Heart right ventricle (tissue), 16 donors: ENCODE measurements at regions of chr9 and their contacts with region 1.

Region 1: DNA sequence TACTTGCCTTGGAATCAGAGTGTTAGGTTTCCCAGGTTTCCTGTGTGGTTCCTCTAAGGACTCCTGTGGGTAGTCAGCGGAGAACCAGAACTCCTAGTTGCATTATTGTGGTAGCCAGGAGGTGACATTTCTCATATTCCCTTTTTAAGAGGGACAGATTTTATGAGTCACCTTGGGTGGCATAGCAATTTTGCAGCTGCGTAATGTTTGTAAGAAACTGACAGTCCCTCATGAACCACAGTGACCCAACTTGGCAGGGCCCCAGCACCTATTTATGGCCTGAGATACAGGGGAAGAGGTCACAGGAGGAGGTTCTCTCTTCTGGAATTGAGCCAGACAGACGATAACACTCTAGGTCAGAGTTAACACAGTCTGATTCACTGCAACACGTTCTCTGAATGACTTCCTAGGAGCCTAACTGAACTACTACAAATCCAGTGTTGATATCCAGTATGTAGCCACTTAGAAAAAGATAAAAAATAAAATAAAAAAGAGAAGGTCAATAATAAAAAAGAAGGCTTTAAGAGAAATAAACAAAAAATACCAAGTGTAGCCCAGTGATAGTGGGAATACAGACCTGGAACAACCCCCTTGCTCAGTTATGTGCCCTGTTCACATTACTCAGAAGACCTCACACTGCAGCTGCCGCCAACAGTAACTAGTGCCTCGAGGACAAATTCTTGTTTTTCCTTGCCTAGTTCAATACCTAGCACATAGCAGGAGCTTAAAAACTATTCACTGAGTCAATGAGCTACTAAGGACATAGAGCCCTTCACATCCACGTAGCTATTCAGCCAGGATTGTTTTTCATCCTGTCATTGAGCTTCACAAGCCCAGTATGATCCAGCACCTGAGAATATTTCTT is 50.7 kb upstream of the VLDLR start:
- DNase-seq: peak; percentile 92 to 95
- ATAC-seq: peak; percentile 86 to 96 (median 94)
- H3K4me3 ChIP-seq: no peak overlapping the region
- H3K27ac ChIP-seq: peak overlapping the region in 9 of 10 donors; percentile 29 to 87 (median 85)
- H3K4me1 ChIP-seq: peaks cover 5 to 74% (median 23%) of the 10 kb centered on the region in 9 donors
- H3K27me3 ChIP-seq: no peaks in the 10 kb centered on the region
- CTCF ChIP-seq: peak in 3 of 9 donors; percentile 28 to 35 (median 31)

Region 2: GRCh38 chr9:2494562-2494961 is 76.3 kb before region 1 on chr9:
- intact Hi-C with region 1: loop called in 4 of 10 experiments (anchors 5 to 10 kb)
- DNase-seq: no peak
- ATAC-seq: peak in 2 of 8 donors; percentile 27 to 57
- H3K4me3 ChIP-seq: no peak overlapping the region
- H3K27ac ChIP-seq: peak overlapping the region in 7 of 10 donors; percentile 5 to 84 (median 64)
- H3K4me1 ChIP-seq: peaks cover 2 to 65% (median 29%) of the 10 kb centered on the region in 9 donors
- H3K27me3 ChIP-seq: no peaks in the 10 kb centered on the region
- CTCF ChIP-seq: no peak

Region 3: GRCh38 chr9:2559212-2560152 is 11.4 kb before region 1 on chr9:
- intact Hi-C with region 1: no loop called
- DNase-seq: peak; percentile 71 to 92
- ATAC-seq: peak; percentile 98 to 100 (median 99)
- H3K4me3 ChIP-seq: no peak overlapping the region
- H3K27ac ChIP-seq: peak overlapping the region; percentile 68 to 94 (median 86)
- H3K4me1 ChIP-seq: peaks cover 7 to 30% (median 25%) of the 10 kb centered on the region in 9 donors
- H3K27me3 ChIP-seq: no peaks in the 10 kb centered on the region
- CTCF ChIP-seq: no peak

Region 4: GRCh38 chr9:2608276-2608675 is 37.4 kb after region 1 on chr9:
- intact Hi-C with region 1: loop called in 1 of 10 experiments (anchors 5 kb)
- DNase-seq: no peak
- ATAC-seq: peak in 2 of 8 donors; percentile 51 to 85
- H3K4me3 ChIP-seq: no peak overlapping the region
- H3K27ac ChIP-seq: peak overlapping the region in 2 of 10 donors; percentile 11 to 30
- H3K4me1 ChIP-seq: peaks cover 2 to 29% (median 11%) of the 10 kb centered on the region in 9 donors
- H3K27me3 ChIP-seq: no peaks in the 10 kb centered on the region
- CTCF ChIP-seq: no peak